ENCODE measurements at regions of chr21 and their contacts with region 1.

Region 1: DNA sequence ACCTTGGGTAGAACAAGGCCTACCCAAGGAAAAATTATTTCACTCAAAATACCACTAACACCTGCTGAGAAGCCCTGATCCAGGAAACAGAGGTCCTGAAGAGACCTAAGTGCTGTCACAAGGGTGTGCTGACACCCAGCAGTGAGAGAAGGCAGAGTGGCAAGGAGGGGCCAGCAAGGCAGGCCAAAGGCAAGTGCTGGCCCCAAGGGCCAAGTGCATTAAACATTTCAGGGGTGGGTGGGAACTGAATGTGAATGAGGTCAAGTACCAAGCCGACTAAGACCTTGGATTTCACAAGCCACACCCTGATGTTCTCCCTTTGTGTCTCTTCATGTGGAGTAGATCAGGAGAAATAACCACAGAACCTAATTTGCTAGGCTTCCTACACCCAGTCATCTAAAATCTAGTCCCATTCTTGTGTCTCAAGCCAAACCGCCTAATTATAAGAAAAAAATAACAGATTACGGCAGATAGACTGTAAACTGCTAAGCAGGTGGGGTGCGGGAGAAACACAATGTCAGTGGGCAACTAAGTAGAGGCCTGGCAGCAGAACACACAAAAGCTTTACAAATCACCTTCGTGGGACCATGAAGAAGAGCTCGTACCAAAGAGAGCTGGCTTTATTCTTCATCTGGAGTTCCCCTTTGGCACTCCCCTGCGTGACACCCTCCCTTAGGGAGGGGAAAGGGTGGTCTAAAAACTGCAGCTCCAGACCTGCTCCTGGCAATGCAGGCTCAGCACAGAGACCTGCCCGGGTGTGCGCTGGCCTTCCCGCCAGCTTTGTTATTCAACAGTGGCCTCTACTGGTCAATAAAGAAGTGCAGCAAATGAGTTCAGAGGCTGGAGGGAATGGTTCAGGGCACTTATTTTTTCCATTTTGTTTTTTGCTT is 8.7 kb downstream of the UBE2G2 start:
- DNase-seq: peak; percentile 86
- H3K4me3 ChIP-seq: no peak overlapping the region; a peak in 1 of 4 replicates
- H3K27ac ChIP-seq: no peak overlapping the region; a peak in 1 of 4 replicates
- H3K4me1 ChIP-seq: peaks cover 0 to 4% of the 10 kb centered on the region in 2 experiments; a peak in 2 of 4 replicates
- H3K27me3 ChIP-seq: no peaks in the 10 kb centered on the region
- CTCF ChIP-seq: peak; percentile 81
- EP300 ChIP-seq: no peak
- RAD21 ChIP-seq: peak; percentile 82

Region 2: GRCh38 chr21:44618504-44618903 is 174.4 kb before region 1 on chr21:
- CTCF ChIA-PET with region 1: interaction called, 11 read pairs
- POLR2A ChIA-PET with region 1: no interaction called
- DNase-seq: no peak
- H3K4me3 ChIP-seq: no peak overlapping the region
- H3K27ac ChIP-seq: no peak overlapping the region
- H3K4me1 ChIP-seq: no peaks in the 10 kb centered on the region
- H3K27me3 ChIP-seq: peaks cover 37% of the 10 kb centered on the region
- CTCF ChIP-seq: no peak
- EP300 ChIP-seq: no peak
- RAD21 ChIP-seq: no peak

Region 3: GRCh38 chr21:44647222-44647552 is 145.8 kb before region 1 on chr21:
- CTCF ChIA-PET with region 1: no interaction called
- POLR2A ChIA-PET with region 1: no interaction called
- DNase-seq: no peak
- H3K4me3 ChIP-seq: no peak overlapping the region
- H3K27ac ChIP-seq: no peak overlapping the region
- H3K4me1 ChIP-seq: no peaks in the 10 kb centered on the region
- H3K27me3 ChIP-seq: peaks cover 38% of the 10 kb centered on the region
- CTCF ChIP-seq: no peak
- EP300 ChIP-seq: no peak
- RAD21 ChIP-seq: no peak

Region 4: GRCh38 chr21:44666401-44667320 is 126.3 kb before region 1 on chr21 and contains the start of gene KRTAP12-2:
- CTCF ChIA-PET with region 1: no interaction called
- POLR2A ChIA-PET with region 1: no interaction called
- DNase-seq: no peak
- H3K4me3 ChIP-seq: no peak within 1 kb of the TSS
- H3K27ac ChIP-seq: no peak within 1 kb of the TSS
- H3K4me1 ChIP-seq: peaks cover 0 to 3% of the 10 kb centered on the region in 2 experiments; a peak in 1 of 4 replicates
- H3K27me3 ChIP-seq: no peaks in the 10 kb centered on the region; the same call in 1 of the 2 replicates
- CTCF ChIP-seq: no peak
- EP300 ChIP-seq: no peak
- RAD21 ChIP-seq: no peak
- polyA plus RNA-seq, gene KRTAP12-2: not detected in 2 replicates

Region 5: DNA sequence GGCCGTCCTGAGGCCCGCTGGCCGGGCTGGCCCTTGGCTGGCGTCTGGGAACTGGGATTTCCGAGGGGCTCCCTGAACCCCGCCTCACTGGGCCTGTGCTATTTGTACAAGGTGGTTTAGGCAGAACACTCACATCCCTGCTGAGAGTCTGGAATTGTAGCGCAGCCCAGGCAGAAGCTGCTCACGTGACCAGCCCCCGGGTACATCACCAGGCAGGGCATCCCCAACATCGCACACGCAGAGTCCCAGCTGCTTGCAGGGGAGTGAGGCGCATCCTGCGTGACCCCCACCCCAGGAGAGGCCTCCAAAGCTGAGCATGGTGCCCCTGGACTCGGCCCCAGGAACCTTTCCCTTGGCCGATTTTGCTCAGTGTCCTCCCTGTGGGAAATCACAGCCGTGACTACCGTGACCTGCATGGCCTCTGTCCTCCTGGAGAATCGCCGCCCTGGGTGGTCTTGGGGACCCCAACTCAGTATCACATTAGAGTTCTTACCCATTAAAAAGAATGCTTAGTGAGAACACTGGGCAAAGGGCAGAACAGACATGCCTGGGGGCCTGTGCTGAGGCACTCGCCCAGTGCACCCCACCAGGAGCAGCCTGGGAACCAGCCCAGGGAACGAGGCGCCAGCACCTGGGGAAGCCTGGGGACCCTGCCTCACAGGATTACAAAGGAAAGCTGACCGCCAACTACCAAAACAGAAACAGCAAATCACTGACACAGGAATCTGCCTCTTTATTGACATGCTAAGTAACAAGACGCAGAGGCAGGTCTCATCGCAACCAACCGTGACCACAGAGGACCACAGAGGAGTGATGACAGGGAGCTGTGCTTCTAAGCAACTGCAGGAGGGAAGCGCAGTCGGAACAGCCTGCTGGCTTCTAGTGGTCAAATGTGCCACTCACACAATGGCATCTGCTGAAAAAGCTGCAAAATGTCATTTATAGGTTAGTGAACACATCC is 24.8 kb before region 1 on chr21:
- CTCF ChIA-PET with region 1: interaction called, 15 read pairs
- POLR2A ChIA-PET with region 1: no interaction called
- DNase-seq: no peak
- H3K4me3 ChIP-seq: no peak overlapping the region
- H3K27ac ChIP-seq: no peak overlapping the region
- H3K4me1 ChIP-seq: peaks cover 0 to 22% of the 10 kb centered on the region in 2 experiments; a peak in 1 of 4 replicates
- H3K27me3 ChIP-seq: no peaks in the 10 kb centered on the region
- CTCF ChIP-seq: no peak
- EP300 ChIP-seq: no peak
- RAD21 ChIP-seq: no peak

Region 6: DNA sequence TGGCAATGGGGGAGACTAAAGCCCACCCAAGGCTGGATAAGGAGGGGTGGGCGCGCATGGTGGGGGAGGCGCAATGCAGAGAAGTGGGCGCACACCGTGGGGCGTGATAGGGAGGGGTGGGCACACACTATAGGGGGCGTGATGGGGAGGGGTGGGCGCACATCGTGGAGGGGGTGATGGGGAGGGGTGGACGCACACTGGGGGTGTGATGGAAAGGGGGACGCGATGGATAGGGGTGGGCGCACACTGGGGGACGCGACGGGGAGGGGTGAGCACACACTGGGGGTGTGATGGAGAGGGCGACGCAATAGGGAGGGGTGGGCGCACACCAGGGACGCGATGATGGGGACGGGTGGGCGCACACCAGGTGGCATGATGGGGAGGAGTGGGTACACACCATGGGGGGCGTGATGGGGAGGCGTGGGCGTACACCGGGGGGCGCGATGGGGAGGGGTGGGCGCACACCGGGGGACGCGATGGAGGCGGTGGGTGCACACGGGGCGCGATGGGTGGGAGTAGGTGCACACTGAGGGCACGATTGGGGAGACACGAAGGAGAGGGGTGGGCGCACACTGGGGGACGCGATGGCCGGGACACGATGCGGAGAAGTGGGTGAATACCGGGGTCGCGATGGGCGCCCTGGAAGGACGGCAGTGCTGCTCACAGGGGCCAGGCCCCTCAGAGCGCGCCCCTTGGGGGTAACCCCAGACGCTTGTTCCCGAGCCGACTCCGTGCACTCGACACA is 24.0 kb after region 1 on chr21:
- CTCF ChIA-PET with region 1: interaction called, 10 read pairs
- POLR2A ChIA-PET with region 1: no interaction called
- DNase-seq: peak; percentile 40
- H3K4me3 ChIP-seq: peak overlapping the region; percentile 75 to 87
- H3K27ac ChIP-seq: peak overlapping the region in 1 of 2 experiments; percentile 88; a peak in 2 of 4 replicates
- H3K4me1 ChIP-seq: peaks cover 8 to 28% of the 10 kb centered on the region in 2 experiments; a peak in 3 of 4 replicates
- H3K27me3 ChIP-seq: no peaks in the 10 kb centered on the region
- CTCF ChIP-seq: no peak
- EP300 ChIP-seq: no peak
- RAD21 ChIP-seq: no peak